ENCODE measurements at regions of chr6 and their contacts with region 1.

Region 1: DNA sequence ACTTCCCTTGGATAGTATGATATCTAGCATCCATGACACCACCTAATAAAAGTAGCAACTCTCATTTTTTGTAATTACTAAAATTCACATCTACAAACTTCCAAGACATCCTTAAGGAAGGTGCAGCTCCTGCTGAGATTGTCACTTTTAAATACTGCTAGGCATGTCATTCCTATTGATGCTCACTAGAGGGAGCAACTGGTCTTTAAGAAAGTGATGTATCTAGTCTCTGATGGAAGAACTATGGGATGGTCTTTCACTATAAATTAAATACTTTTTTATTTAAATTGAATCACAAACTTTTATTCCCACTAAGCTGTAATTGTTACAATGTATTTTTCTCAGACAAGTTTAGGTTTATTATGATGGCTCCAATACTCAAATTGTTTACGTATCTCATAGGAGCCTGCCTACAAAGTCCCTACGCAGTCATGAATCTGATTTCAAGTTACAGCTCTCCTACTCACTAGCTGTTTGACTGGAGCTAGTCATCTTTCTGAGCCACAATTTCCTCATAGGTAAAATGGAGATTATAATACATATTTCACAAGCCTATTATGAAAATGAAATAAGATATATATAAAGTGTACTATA is 8.1 kb upstream of the TSPYL1 start:
- DNase-seq: no peak
- H3K4me3 ChIP-seq: no peak overlapping the region
- H3K27ac ChIP-seq: no peak overlapping the region
- H3K4me1 ChIP-seq: no peaks in the 10 kb centered on the region
- H3K27me3 ChIP-seq: no peaks in the 10 kb centered on the region
- CTCF ChIP-seq: peak; percentile 87 to 91

Region 2: DNA sequence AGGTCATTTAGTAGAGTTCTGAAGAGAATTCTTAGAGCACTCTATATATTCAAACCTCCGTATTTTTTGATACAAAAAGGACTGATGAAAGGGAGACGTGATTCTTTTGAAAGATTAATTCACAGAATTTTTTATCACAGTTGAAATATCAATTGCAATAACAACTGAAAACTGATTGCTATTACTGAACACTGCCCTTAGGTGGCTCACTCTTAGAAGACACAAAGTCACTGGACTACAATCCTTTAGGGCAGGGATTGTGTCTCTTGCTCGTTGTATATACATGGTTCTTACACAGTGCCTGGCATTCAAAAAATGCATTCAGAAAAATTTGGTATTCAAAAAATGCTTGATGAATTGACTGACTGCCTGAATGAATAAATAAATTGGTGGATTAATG is 156.3 kb after region 1 on chr6:
- intact Hi-C with region 1: loop called (anchors 5 kb)
- DNase-seq: no peak
- H3K4me3 ChIP-seq: no peak overlapping the region
- H3K27ac ChIP-seq: no peak overlapping the region
- H3K4me1 ChIP-seq: peaks cover 0 to 38% (median 5%) of the 10 kb centered on the region in 4 donors
- H3K27me3 ChIP-seq: no peaks in the 10 kb centered on the region
- CTCF ChIP-seq: peak; percentile 39 to 44

Region 3: GRCh38 chr6:116596815-116597214 is 309.0 kb after region 1 on chr6:
- intact Hi-C with region 1: no loop called
- DNase-seq: no peak
- H3K4me3 ChIP-seq: no peak overlapping the region
- H3K27ac ChIP-seq: no peak overlapping the region
- H3K4me1 ChIP-seq: no peaks in the 10 kb centered on the region
- H3K27me3 ChIP-seq: no peaks in the 10 kb centered on the region
- CTCF ChIP-seq: no peak